ENCODE measurements at regions of chr6 and their contacts with region 1.

Region 1: DNA sequence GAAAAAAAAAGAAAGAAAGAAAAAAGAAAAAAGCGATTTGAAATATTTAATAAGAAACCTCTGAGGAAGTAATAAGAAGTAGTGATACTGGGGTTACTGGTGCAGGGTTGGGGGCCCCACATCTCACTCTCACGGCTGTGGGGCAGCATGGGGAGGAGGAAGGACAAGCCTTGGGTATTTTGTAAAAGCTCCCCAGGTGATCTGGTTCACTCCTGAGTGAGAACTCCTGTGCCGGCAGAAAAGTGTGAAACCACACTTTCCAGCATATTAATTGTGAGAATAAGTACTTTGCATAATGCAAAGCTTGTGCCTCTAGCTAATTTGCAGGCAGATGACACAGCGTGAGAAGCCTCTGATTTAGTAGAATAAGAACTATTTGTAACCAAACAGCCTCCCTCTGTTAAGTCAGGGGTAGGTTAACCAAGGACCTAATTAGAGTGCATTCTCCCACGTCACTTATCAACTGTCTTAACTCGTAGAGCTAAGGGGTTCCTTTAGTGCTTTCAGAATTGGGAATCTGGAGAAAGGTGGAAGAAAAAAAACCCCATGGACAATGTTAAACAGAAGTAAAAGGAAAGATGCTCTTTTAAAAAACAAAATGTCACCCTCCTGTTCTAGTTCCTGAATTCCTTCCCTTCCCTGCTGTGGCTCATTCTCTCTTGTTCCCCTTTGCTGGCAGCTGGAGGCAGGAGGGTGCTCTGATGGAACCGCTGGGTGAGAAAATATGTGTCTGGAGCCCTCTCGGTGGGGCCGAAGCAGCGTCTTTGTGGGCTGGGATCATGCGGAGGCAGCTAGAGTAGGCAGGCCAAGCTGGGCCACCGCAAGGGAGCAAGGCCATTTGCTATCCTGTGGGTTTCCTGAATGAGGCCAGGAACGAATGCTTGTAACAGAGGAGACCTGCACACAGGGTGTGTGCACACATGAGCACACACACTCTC is 108.7 kb downstream of the FYN start:
- DNase-seq: no peak
- H3K4me3 Mint-ChIP-seq: peak overlapping the region; percentile 53
- H3K27ac Mint-ChIP-seq: peak overlapping the region; percentile 93
- H3K4me1 Mint-ChIP-seq: peaks cover 95% of the 10 kb centered on the region
- H3K27me3 Mint-ChIP-seq: no peaks in the 10 kb centered on the region

Region 2: DNA sequence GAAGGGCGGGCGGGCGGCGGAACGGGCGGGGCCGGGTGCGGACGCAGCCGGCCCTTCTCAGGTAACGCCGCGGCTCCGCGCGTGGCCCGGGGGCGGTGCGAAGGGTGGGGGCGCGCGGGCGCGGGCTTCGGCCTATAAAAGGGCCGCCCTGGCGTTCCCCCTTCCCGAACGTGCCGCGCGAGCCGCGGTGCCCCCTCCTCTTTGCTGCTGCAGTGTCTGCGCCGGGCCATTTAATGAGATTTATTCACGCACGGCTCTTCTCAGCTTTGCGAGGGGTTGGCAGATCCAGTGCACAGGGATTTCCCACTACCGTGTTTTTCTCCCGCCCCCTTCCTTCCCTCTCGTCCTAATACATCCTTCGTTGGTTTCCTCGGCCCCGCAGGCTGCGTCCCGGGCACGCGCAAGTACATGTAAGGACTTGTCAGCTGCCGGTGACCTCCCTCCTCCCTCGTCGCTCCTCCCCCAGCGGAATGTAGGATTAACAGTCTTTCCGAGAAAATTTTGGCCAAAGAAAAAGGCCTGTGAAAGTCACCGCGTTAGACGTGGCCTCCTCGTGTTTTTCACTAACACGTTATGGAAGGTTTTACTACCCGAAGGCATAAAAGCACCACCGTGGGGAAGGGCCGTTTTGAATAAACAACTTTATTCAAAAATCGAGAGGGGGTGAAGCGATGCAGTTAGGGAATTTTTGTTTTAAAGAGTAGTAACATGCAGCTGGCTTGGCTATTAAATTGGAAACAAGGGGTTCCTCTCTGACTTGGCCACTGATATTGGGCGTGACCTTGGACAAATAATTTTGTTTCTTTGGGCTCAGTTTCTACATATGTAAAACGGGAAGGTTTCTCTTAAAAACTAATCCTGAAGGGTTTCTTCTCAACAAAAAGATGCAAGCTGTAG is 280.5 kb before region 1 on chr6:
- intact Hi-C with region 1: loop called (anchors 5 kb)
- DNase-seq: no peak
- H3K4me3 Mint-ChIP-seq: peak overlapping the region; percentile 91
- H3K27ac Mint-ChIP-seq: peak overlapping the region; percentile 96
- H3K4me1 Mint-ChIP-seq: peaks cover 50% of the 10 kb centered on the region
- H3K27me3 Mint-ChIP-seq: no peaks in the 10 kb centered on the region

Region 3: DNA sequence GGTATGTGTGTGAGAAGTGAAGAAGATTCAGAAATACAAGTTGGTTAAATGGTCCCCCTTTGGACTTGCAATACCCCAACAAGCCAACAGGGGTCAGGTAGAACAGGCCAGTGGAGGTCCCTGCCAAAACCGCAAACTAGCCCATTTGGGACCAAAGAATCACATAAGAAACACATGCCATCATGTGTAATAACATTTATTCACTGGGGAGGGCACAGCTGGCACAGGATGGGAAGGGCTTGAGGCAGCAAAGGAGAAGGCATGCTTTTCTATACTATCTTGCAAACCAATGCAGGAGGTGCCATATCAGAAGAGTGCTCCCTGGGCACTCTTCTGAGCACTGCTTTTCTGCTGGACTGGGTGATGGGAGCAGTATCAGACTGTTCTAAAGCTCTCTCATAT is 42.8 kb before region 1 on chr6:
- intact Hi-C with region 1: loop called (anchors 5 kb)
- DNase-seq: peak; percentile 36
- H3K4me3 Mint-ChIP-seq: no peak overlapping the region
- H3K27ac Mint-ChIP-seq: no peak overlapping the region
- H3K4me1 Mint-ChIP-seq: peaks cover 54% of the 10 kb centered on the region
- H3K27me3 Mint-ChIP-seq: no peaks in the 10 kb centered on the region

Region 4: GRCh38 chr6:111777357-111777756 is 12.8 kb after region 1 on chr6:
- intact Hi-C with region 1: loop called (anchors 1 kb)
- DNase-seq: no peak
- H3K4me3 Mint-ChIP-seq: peak overlapping the region; percentile 2
- H3K27ac Mint-ChIP-seq: peak overlapping the region; percentile 66
- H3K4me1 Mint-ChIP-seq: peaks cover 71% of the 10 kb centered on the region
- H3K27me3 Mint-ChIP-seq: no peaks in the 10 kb centered on the region

Region 5: DNA sequence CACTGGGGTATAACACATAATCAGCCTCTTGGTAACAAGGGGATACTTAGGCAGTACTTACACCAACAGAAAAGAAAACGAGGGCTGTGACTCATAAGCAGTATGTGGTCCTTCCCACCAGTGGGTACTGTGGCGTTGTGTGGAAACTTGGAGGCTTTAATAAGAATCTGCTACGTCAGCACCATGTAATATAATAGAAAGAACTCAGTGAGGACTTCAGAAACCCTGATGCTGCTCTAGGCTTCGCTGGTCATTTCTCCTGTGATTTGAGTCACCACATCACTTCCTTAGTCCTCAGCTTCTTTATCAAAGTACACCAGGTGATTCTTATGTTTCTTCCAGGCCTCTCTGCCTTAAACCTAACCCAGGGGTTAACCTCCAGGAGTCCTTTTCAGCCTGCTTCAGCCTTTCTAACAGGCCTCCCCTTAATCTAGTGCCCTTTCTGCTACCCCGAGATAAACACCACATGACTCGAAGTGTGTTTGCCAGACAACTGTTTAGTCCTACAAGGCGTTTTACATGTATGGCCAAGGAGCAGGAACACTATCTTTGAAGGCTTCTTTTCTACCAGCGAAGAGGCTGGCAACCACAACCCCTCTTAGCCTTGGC is 40.2 kb after region 1 on chr6:
- intact Hi-C with region 1: loop called (anchors 1 kb)
- DNase-seq: peak; percentile 59
- H3K4me3 Mint-ChIP-seq: peak overlapping the region; percentile 26
- H3K27ac Mint-ChIP-seq: peak overlapping the region; percentile 96
- H3K4me1 Mint-ChIP-seq: peaks cover 76% of the 10 kb centered on the region
- H3K27me3 Mint-ChIP-seq: no peaks in the 10 kb centered on the region

Region 6: GRCh38 chr6:111837641-111838500 is 73.4 kb after region 1 on chr6:
- intact Hi-C with region 1: loop called (anchors 1 kb)
- DNase-seq: peak; percentile 59
- H3K4me3 Mint-ChIP-seq: peak overlapping the region; percentile 77
- H3K27ac Mint-ChIP-seq: peak overlapping the region; percentile 97
- H3K4me1 Mint-ChIP-seq: peaks cover 67% of the 10 kb centered on the region
- H3K27me3 Mint-ChIP-seq: no peaks in the 10 kb centered on the region

Region 7: DNA sequence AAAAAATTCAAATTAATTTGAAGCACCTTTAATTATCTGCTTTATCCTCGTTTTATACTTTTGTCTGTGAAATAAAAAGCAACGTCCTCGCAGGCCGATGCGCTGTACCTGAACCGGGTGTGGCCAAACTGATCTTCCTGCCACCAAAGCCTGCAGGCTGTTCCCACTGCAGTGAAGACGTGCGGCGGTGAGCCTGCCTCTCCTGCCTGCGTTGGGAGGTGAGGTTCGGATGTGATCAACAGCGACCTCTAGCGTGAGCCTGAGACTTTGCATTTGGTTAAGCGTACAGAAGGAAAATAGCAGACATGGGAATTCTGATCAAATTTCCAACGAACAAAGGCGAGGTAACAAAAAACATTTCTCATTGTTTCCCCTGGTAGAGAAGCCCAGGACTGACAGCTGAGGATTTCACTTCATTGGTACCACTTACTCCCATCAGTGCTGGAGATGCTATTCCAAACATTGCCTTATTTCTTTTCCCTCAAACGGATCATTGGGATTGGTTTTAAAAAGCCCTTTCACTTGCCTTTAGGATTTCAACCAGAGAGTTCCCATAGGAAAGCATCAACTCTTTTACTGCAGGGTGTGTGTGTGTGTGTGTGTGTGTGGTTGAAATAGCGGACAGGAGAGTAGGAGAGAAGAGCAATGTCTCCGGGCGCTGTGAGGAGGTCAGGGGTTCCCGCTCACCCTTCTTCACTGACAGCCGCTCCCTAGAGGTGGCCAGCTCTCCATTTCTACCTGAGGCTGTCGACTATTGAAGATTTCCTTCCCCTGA is 232.8 kb after region 1 on chr6:
- intact Hi-C with region 1: loop called (anchors 5 kb)
- DNase-seq: peak; percentile 69
- H3K4me3 Mint-ChIP-seq: no peak overlapping the region
- H3K27ac Mint-ChIP-seq: no peak overlapping the region
- H3K4me1 Mint-ChIP-seq: peaks cover 37% of the 10 kb centered on the region
- H3K27me3 Mint-ChIP-seq: no peaks in the 10 kb centered on the region

Measured in activated T-helper 2 cell treated with anti-CD3 and anti-CD28 coated beads, Interferon-gamma antibody, Interleukin-2, Interleukin-4, amounts not matched to agents 10 μg/mL and 5 μg/mL and 100 μg/mL, durations not matched to agents 14 hours and 24 hours and 36 hours (primary cell).